ENCODE measurements at regions of chr22 and their contacts with region 1.

Region 1: DNA sequence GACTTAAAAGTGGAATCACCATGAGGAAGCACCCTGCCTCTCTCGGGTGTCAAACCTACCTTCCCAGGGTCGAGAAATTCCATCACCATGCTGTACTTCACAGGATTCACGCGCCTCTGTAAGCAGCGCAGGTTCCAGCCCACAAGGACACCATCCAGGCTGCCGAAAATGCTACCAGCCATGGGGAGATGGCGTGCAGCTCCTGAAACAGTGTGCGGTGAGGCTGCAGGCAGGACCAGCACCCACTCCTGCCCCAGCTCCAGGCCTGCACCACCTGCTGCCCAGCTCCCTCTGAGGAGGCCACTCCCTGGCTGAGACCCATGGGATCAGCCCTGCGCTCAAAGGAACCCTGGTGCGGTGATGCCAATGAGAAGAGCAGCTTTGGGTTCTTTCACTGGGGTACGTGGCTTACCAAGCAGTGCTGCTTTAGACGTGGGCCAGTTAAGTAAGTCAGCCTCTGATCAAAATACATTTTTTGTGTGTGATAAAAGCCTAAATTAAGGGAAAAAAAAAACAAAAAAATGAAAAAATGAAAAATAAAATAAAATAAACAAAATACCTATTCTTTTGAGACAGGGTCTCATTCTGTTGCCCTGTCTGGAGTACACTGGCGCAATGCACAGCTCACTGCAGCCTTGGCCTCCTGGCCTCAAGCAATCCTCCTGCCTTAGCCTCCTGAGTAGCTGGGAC is 115.4 kb downstream of the MED15 start:
- DNase-seq: no peak
- H3K4me3 ChIP-seq: no peak overlapping the region
- H3K27ac ChIP-seq: no peak overlapping the region
- H3K4me1 ChIP-seq: no peaks in the 10 kb centered on the region
- CTCF ChIP-seq: no peak

Region 2: GRCh38 chr22:20652582-20653399 is 30.0 kb after region 1 on chr22:
- CTCF ChIA-PET with region 1: no interaction called
- POLR2A ChIA-PET with region 1: interaction called, 10 read pairs
- intact Hi-C with region 1: no loop called
- DNase-seq: no peak
- H3K4me3 ChIP-seq: no peak overlapping the region
- H3K27ac ChIP-seq: no peak overlapping the region
- H3K4me1 ChIP-seq: no peaks in the 10 kb centered on the region
- CTCF ChIP-seq: no peak